GM12878 (cell line): ENCODE measurements at regions of chr12 and their contacts with region 1.

Region 1: GRCh38 chr12:45745861-45746277 is 16.4 kb downstream of the ARID2 start:
- DNase-seq: no peak
- ATAC-seq: peak; percentile 76
- H3K4me3 ChIP-seq: no peak overlapping the region
- H3K27ac ChIP-seq: no peak overlapping the region
- H3K4me1 ChIP-seq: no peaks in the 10 kb centered on the region
- H3K27me3 ChIP-seq: no peaks in the 10 kb centered on the region
- CTCF ChIP-seq: peak in 2 of 3 experiments; percentile 30 to 38; a peak in 3 of 6 replicates
- EP300 ChIP-seq: no peak
- POLR2A ChIP-seq: no peak
- RAD21 ChIP-seq: no peak

Region 2: GRCh38 chr12:45634273-45634917 is 111.5 kb before region 1 on chr12:
- CTCF ChIA-PET with region 1: no interaction called
- POLR2A ChIA-PET with region 1: no interaction called
- RAD21 ChIA-PET with region 1: no interaction called
- SMC1A ChIA-PET with region 1: no interaction called
- in situ Hi-C with region 1: no loop called
- intact Hi-C with region 1: no loop called
- DNase-seq: no peak
- ATAC-seq: peak; percentile 83
- H3K4me3 ChIP-seq: no peak overlapping the region; the same call in 1 of the 2 replicates
- H3K27ac ChIP-seq: no peak overlapping the region
- H3K4me1 ChIP-seq: peaks cover 14% of the 10 kb centered on the region
- H3K27me3 ChIP-seq: no peaks in the 10 kb centered on the region
- CTCF ChIP-seq: no peak
- EP300 ChIP-seq: no peak
- POLR2A ChIP-seq: no peak
- RAD21 ChIP-seq: no peak

Region 3: GRCh38 chr12:45720069-45720468 is 25.8 kb before region 1 on chr12:
- CTCF ChIA-PET with region 1: interaction called, 10 read pairs
- POLR2A ChIA-PET with region 1: interaction called, 3 read pairs
- RAD21 ChIA-PET with region 1: interaction called, 4 read pairs
- SMC1A ChIA-PET with region 1: interaction called, 32 read pairs
- in situ Hi-C with region 1: no loop called
- intact Hi-C with region 1: no loop called
- DNase-seq: no peak
- ATAC-seq: no peak
- H3K4me3 ChIP-seq: no peak overlapping the region
- H3K27ac ChIP-seq: no peak overlapping the region
- H3K4me1 ChIP-seq: no peaks in the 10 kb centered on the region
- H3K27me3 ChIP-seq: no peaks in the 10 kb centered on the region
- CTCF ChIP-seq: no peak
- EP300 ChIP-seq: no peak
- POLR2A ChIP-seq: no peak
- RAD21 ChIP-seq: no peak

Region 4: GRCh38 chr12:45728630-45729232 is 17.1 kb before region 1 on chr12:
- CTCF ChIA-PET with region 1: interaction called, 11 read pairs
- POLR2A ChIA-PET with region 1: interaction called, 8 read pairs
- RAD21 ChIA-PET with region 1: interaction called, 4 read pairs
- SMC1A ChIA-PET with region 1: interaction called, 32 read pairs
- in situ Hi-C with region 1: no loop called
- intact Hi-C with region 1: no loop called
- DNase-seq: peak; percentile 87
- ATAC-seq: peak; percentile 73
- H3K4me3 ChIP-seq: peak overlapping the region; percentile 93
- H3K27ac ChIP-seq: peak overlapping the region; percentile 95
- H3K4me1 ChIP-seq: no peaks in the 10 kb centered on the region
- H3K27me3 ChIP-seq: no peaks in the 10 kb centered on the region
- CTCF ChIP-seq: peak; percentile 94 to 98 (median 96)
- EP300 ChIP-seq: peak; percentile 36 to 45; a peak in 1 of 4 replicates
- POLR2A ChIP-seq: peak; percentile 96
- RAD21 ChIP-seq: peak; percentile 64

Region 5: GRCh38 chr12:45756666-45757065 is 10.8 kb after region 1 on chr12:
- CTCF ChIA-PET with region 1: interaction called, 22 read pairs
- POLR2A ChIA-PET with region 1: interaction called, 4 read pairs
- RAD21 ChIA-PET with region 1: interaction called, 3 read pairs
- SMC1A ChIA-PET with region 1: interaction called, 5 read pairs
- in situ Hi-C with region 1: no loop called
- intact Hi-C with region 1: no loop called
- DNase-seq: no peak
- ATAC-seq: no peak
- H3K4me3 ChIP-seq: no peak overlapping the region
- H3K27ac ChIP-seq: no peak overlapping the region
- H3K4me1 ChIP-seq: no peaks in the 10 kb centered on the region
- H3K27me3 ChIP-seq: no peaks in the 10 kb centered on the region
- CTCF ChIP-seq: no peak
- EP300 ChIP-seq: no peak
- POLR2A ChIP-seq: no peak
- RAD21 ChIP-seq: no peak

Region 6: GRCh38 chr12:45762185-45763110 is 16.6 kb after region 1 on chr12:
- CTCF ChIA-PET with region 1: interaction called, 22 read pairs
- POLR2A ChIA-PET with region 1: interaction called, 4 read pairs
- RAD21 ChIA-PET with region 1: interaction called, 3 read pairs
- SMC1A ChIA-PET with region 1: interaction called, 5 read pairs
- in situ Hi-C with region 1: no loop called
- intact Hi-C with region 1: no loop called
- DNase-seq: no peak
- ATAC-seq: peak; percentile 78
- H3K4me3 ChIP-seq: no peak overlapping the region
- H3K27ac ChIP-seq: no peak overlapping the region
- H3K4me1 ChIP-seq: no peaks in the 10 kb centered on the region
- H3K27me3 ChIP-seq: no peaks in the 10 kb centered on the region
- CTCF ChIP-seq: peak; percentile 50 to 62 (median 57)
- EP300 ChIP-seq: no peak
- POLR2A ChIP-seq: no peak
- RAD21 ChIP-seq: peak; percentile 58

Region 7: DNA sequence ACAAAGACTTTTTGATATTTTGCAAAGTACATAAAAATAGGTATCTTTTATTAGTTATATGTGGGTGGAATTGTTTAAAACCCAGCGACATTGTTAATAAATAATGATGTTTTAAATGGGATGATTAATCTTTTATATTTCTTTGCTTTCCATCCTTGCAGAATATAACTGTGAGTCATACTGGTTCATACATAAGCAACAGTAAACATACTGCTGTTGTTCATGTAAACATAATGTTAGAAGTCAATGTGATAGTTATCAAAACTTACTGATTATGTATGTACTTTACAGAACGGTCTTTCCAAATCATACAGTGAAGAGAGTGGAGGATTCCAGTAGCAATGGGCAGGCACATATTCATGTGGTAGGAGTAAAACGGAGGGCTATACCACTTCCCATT is 103.4 kb after region 1 on chr12:
- CTCF ChIA-PET with region 1: no interaction called
- POLR2A ChIA-PET with region 1: no interaction called
- RAD21 ChIA-PET with region 1: no interaction called
- SMC1A ChIA-PET with region 1: no interaction called
- in situ Hi-C with region 1: no loop called
- intact Hi-C with region 1: no loop called
- DNase-seq: no peak
- ATAC-seq: no peak
- H3K4me3 ChIP-seq: no peak overlapping the region
- H3K27ac ChIP-seq: no peak overlapping the region
- H3K4me1 ChIP-seq: no peaks in the 10 kb centered on the region
- H3K27me3 ChIP-seq: no peaks in the 10 kb centered on the region
- CTCF ChIP-seq: no peak
- EP300 ChIP-seq: no peak
- POLR2A ChIP-seq: no peak
- RAD21 ChIP-seq: no peak